ENCODE measurements at regions of chr2 and their contacts with region 1.

Region 1: GRCh38 chr2:224847961-224848850 is 132.0 kb upstream of the CCDC195 start:
- DNase-seq: peak; percentile 74

Region 2: DNA sequence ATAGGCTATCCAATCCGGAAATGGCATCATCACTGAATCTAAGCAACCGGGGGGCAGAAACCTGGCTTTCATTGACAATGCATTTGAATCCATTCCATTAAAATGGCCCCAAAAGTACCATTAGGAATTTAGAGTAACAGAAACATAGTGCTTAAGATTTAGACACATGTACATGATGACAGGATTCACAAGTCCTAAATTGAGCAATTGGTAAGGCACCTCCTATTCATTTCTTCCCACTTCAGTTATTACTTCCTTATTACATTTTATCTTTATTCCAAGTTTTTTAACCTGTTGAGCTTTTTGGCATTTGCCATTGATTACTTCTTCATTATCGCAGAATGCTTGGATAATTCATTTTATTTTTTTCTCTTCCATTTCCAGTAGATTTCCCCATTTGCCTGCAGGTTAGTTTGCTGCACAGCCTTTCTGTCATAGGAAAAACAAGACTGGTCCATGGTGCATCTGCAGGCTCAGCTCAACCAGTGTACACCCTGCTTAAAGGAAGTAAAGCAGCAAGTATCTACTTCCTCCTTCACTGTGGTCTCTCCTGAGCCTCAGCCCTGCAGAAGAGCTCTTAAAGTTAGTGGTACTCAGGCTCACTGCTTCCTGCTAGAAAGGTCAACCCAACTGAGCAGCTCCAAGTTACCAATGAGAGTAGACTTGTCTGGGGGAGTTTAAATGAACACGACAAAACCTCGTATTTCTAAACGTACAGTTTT is 104.9 kb after region 1 on chr2:
- in situ Hi-C with region 1: no loop called
- DNase-seq: no peak

Region 3: GRCh38 chr2:224982910-224983711 is 134.9 kb after region 1 on chr2:
- in situ Hi-C with region 1: loop called (anchors 25 kb)
- DNase-seq: peak; percentile 69